ENCODE measurements at regions of chr19 and their contacts with region 1.

Region 1: GRCh38 chr19:30626626-30626966 is 254.4 kb downstream of the ZNF536 start:
- DNase-seq: no peak
- H3K4me3 ChIP-seq: no peak overlapping the region
- H3K27ac ChIP-seq: no peak overlapping the region
- H3K4me1 ChIP-seq: no peaks in the 10 kb centered on the region
- H3K27me3 ChIP-seq: peaks cover 66% of the 10 kb centered on the region
- CTCF ChIP-seq: no peak

Region 2: DNA sequence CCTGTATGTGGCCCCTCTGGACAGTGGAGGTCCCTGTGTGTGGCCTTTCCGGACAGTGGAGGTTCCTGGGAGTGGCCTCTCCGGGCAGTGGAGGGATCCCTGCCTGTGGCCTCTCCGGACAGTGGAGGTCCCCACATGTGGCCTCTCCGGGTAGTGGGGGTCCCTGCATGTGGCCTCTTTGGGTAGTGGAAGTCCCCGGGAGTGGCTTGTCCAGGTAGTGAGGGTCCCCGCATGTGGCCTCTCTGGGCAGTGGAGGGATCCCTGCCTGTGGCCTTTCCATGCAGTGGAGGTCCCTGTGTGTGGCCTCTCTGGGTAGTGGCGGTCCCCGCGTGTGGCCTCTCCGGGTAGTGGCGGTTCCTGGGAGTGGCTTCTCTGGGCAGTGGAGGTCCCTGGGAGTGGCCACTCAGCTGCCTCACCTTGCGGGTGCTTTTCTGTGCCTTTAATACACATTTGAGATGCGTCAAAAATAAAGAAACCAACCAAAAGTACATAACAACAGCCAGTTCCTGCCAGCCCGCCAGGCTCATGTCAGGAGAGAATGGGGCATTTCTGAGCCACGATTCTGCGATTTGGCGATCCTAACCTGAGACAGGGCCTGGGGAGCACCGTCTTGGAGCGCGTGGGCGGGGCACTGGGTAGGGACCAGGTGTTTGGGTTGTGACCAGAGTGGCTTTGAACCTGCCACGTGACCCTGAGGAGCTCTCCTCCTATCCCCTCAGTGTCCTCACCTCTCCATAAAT is 59.7 kb before region 1 on chr19:
- CTCF ChIA-PET with region 1: interaction called, 16 read pairs
- POLR2A ChIA-PET with region 1: no interaction called
- intact Hi-C with region 1: no loop called
- DNase-seq: no peak
- H3K4me3 ChIP-seq: no peak overlapping the region
- H3K27ac ChIP-seq: no peak overlapping the region
- H3K4me1 ChIP-seq: no peaks in the 10 kb centered on the region
- H3K27me3 ChIP-seq: peaks cover 71% of the 10 kb centered on the region
- CTCF ChIP-seq: no peak